Posterior cingulate gyrus (tissue), 11 donors: ENCODE measurements at regions of chr5 and their contacts with region 1.

Region 1: DNA sequence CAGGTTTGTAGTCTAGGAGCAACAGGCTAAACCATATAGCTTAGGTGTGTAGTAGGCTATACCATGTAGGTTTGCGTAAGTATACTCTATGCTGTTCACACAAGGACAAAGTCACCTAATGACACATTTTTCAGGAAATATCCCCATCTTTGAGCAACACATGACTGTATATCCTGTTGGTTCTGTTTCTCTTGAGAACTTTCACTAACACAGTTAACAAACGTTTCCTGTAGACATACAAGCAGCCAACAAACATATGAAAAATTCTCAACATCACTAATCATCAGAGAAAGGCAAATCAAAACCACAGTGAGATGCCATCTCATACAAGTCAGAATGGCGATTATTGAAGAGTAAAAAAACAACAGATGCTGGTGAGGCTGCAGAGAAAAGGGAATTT is 68.2 kb downstream of the NR2F1-AS1 start:
- DNase-seq: no peak

Region 2: GRCh38 chr5:93421987-93422401 is 90.8 kb before region 1 on chr5:
- intact Hi-C with region 1: loop called (anchors 10 kb)
- DNase-seq: peak in 5 of 10 donors; percentile 15 to 87 (median 69)